WTC11 (cell line): ENCODE measurements at regions of chr3 and their contacts with region 1.

Region 1: GRCh38 chr3:34260271-34261006 is 462.0 kb downstream of the PDCD6IP start:
- DNase-seq: peak; percentile 65
- ATAC-seq: peak; percentile 45
- H3K4me3 Mint-ChIP-seq: no peak overlapping the region
- H3K27ac Mint-ChIP-seq: no peak overlapping the region
- H3K4me1 Mint-ChIP-seq: peaks cover 50% of the 10 kb centered on the region
- H3K27me3 Mint-ChIP-seq: peaks cover 27% of the 10 kb centered on the region
- CTCF ChIP-seq: peak; percentile 32

Region 2: GRCh38 chr3:33883538-33883950 is 376.9 kb before region 1 on chr3:
- CTCF ChIA-PET with region 1: interaction called, 14 read pairs
- POLR2A ChIA-PET with region 1: no interaction called
- DNase-seq: no peak
- ATAC-seq: peak; percentile 27
- H3K4me3 Mint-ChIP-seq: peak overlapping the region; percentile 62
- H3K27ac Mint-ChIP-seq: no peak overlapping the region
- H3K4me1 Mint-ChIP-seq: peaks cover 36% of the 10 kb centered on the region
- H3K27me3 Mint-ChIP-seq: no peaks in the 10 kb centered on the region
- CTCF ChIP-seq: peak; percentile 72

Region 3: DNA sequence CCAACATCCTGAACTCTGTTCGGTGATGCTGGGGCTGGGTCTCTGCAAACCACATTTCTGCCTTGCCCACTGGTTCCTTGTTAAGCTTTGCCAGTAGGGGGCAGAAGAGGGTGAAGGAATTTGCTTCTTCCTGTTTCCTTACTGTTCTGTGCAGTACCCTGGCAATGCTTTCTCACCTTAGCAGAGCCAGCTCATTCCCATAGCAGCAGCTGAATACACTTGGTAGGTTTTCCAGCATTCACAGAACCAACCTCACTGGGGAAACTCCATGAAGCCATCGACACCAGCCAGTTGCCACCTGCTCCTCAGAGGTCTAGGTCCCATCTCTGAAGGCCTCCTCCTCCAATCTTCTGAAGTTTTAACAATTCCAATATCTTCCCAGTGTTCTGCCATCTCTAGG is 153.6 kb before region 1 on chr3:
- CTCF ChIA-PET with region 1: interaction called, 12 read pairs
- POLR2A ChIA-PET with region 1: no interaction called
- DNase-seq: peak; percentile 61
- ATAC-seq: peak; percentile 96
- H3K4me3 Mint-ChIP-seq: no peak overlapping the region
- H3K27ac Mint-ChIP-seq: no peak overlapping the region
- H3K4me1 Mint-ChIP-seq: no peaks in the 10 kb centered on the region
- H3K27me3 Mint-ChIP-seq: no peaks in the 10 kb centered on the region
- CTCF ChIP-seq: peak; percentile 68

Region 4: GRCh38 chr3:34132069-34132692 is 128.3 kb before region 1 on chr3:
- CTCF ChIA-PET with region 1: no interaction called
- POLR2A ChIA-PET with region 1: no interaction called
- DNase-seq: no peak
- ATAC-seq: no peak
- H3K4me3 Mint-ChIP-seq: no peak overlapping the region
- H3K27ac Mint-ChIP-seq: no peak overlapping the region
- H3K4me1 Mint-ChIP-seq: no peaks in the 10 kb centered on the region
- H3K27me3 Mint-ChIP-seq: no peaks in the 10 kb centered on the region
- CTCF ChIP-seq: no peak

Region 5: GRCh38 chr3:34248352-34248751 is 12.1 kb before region 1 on chr3:
- CTCF ChIA-PET with region 1: interaction called, 19 read pairs
- POLR2A ChIA-PET with region 1: no interaction called
- DNase-seq: no peak
- ATAC-seq: no peak
- H3K4me3 Mint-ChIP-seq: no peak overlapping the region
- H3K27ac Mint-ChIP-seq: no peak overlapping the region
- H3K4me1 Mint-ChIP-seq: peaks cover 5% of the 10 kb centered on the region; the same call in 1 of the 2 replicates
- H3K27me3 Mint-ChIP-seq: peaks cover 21% of the 10 kb centered on the region
- CTCF ChIP-seq: no peak

Region 6: DNA sequence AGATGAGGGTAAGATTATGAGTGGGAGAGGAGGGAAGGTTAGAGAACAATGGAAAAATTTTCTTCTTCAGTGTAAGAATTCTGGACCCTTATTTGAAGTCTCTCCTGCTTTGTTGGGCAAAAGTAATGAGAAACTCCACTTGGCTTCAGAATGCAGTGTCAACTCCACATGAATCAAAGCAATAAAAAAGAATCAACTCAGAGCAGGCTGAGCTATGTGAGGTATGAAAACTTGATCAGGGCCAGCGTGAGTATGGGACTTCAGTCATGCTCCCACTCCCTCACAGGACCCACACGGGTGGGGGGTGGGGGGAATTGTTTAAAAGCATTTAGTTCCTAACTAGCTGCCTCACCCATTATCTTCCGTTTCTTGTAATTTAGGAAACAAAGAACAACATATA is 40.2 kb after region 1 on chr3:
- CTCF ChIA-PET with region 1: interaction called, 14 read pairs
- POLR2A ChIA-PET with region 1: no interaction called
- DNase-seq: no peak
- ATAC-seq: no peak
- H3K4me3 Mint-ChIP-seq: no peak overlapping the region
- H3K27ac Mint-ChIP-seq: no peak overlapping the region
- H3K4me1 Mint-ChIP-seq: peaks cover 44% of the 10 kb centered on the region
- H3K27me3 Mint-ChIP-seq: peaks cover 94% of the 10 kb centered on the region
- CTCF ChIP-seq: no peak

Region 7: GRCh38 chr3:34387826-34388564 is 127.6 kb after region 1 on chr3:
- CTCF ChIA-PET with region 1: interaction called, 28 read pairs
- POLR2A ChIA-PET with region 1: no interaction called
- DNase-seq: peak; percentile 16
- ATAC-seq: peak; percentile 83
- H3K4me3 Mint-ChIP-seq: no peak overlapping the region
- H3K27ac Mint-ChIP-seq: no peak overlapping the region
- H3K4me1 Mint-ChIP-seq: peaks cover 10% of the 10 kb centered on the region
- H3K27me3 Mint-ChIP-seq: no peaks in the 10 kb centered on the region
- CTCF ChIP-seq: no peak

Region 8: DNA sequence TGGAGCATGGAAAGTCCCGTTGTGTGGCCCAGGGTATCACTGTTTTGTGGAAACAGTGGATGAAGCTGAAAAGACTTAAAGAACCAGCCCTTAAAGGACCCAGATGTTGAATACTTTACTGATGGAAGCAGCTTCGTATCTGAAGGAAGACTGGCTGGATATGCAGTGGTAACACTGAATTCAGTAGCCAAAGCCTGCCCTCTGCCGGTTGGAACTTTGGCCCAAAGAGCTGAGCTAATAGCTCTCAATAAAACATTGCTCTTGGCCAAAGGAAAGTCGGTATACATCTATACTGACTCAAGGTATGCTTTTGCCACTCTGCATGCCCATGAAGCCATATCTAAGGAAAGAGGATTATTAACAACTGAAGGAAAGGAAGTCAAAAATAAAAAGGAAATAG is 423.4 kb after region 1 on chr3:
- CTCF ChIA-PET with region 1: interaction called, 22 read pairs
- POLR2A ChIA-PET with region 1: no interaction called
- DNase-seq: peak; percentile 82
- ATAC-seq: peak; percentile 82
- H3K4me3 Mint-ChIP-seq: no peak overlapping the region
- H3K27ac Mint-ChIP-seq: no peak overlapping the region
- H3K4me1 Mint-ChIP-seq: no peaks in the 10 kb centered on the region
- H3K27me3 Mint-ChIP-seq: no peaks in the 10 kb centered on the region; the same call in 1 of the 2 replicates
- CTCF ChIP-seq: peak; percentile 44